ENCODE measurements at regions of chr1 and their contacts with region 1.

Region 1: DNA sequence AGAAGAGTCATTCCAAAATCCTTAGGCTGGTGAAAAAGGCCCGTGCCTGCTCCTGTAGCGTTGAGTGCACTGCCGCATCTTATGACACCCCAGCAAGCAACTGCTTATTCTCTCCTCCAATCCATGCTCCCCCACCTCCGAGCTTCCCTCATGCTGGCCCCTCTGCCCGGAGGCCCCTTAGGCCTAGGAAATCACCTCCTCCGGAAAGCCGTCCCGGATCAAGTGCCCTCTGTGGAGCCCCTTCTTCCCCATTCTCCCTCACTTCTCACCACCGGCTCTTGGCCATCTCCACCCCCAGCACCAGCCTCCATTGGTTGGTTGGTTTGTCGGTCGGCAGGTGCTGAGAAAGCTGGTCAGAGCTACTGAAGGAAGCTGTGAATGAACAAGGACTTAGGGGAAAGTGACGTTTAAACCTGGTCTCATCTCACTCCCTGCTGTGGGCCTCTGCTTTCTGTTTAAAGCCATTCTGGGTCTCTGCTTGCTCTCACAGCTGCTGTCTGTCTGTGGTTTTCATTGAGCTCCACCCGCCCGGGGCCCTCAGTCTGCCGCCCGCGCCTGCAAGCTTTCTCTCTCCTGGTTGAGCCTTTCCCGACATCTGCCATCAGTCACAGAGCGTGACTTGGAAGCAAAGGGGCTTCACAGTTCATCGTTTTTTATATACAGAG is 122.2 kb downstream of the KCNN3 start:
- DNase-seq: peak; percentile 78
- ATAC-seq: peak; percentile 84
- H3K4me3 Mint-ChIP-seq: peak overlapping the region; percentile 68
- H3K27ac Mint-ChIP-seq: peak overlapping the region; percentile 90
- H3K4me1 Mint-ChIP-seq: peaks cover 68% of the 10 kb centered on the region
- H3K27me3 Mint-ChIP-seq: no peaks in the 10 kb centered on the region
- CTCF ChIP-seq: no peak

Region 2: GRCh38 chr1:154736841-154737240 is 11.0 kb before region 1 on chr1:
- CTCF ChIA-PET with region 1: interaction called, 21 read pairs
- POLR2A ChIA-PET with region 1: interaction called, 3 read pairs
- intact Hi-C with region 1: no loop called
- DNase-seq: peak; percentile 75
- ATAC-seq: peak; percentile 93
- H3K4me3 Mint-ChIP-seq: no peak overlapping the region
- H3K27ac Mint-ChIP-seq: peak overlapping the region; percentile 72
- H3K4me1 Mint-ChIP-seq: peaks cover 38% of the 10 kb centered on the region
- H3K27me3 Mint-ChIP-seq: peaks cover 9% of the 10 kb centered on the region
- CTCF ChIP-seq: no peak